ENCODE measurements at regions of chr14 and their contacts with region 1.

Region 1: DNA sequence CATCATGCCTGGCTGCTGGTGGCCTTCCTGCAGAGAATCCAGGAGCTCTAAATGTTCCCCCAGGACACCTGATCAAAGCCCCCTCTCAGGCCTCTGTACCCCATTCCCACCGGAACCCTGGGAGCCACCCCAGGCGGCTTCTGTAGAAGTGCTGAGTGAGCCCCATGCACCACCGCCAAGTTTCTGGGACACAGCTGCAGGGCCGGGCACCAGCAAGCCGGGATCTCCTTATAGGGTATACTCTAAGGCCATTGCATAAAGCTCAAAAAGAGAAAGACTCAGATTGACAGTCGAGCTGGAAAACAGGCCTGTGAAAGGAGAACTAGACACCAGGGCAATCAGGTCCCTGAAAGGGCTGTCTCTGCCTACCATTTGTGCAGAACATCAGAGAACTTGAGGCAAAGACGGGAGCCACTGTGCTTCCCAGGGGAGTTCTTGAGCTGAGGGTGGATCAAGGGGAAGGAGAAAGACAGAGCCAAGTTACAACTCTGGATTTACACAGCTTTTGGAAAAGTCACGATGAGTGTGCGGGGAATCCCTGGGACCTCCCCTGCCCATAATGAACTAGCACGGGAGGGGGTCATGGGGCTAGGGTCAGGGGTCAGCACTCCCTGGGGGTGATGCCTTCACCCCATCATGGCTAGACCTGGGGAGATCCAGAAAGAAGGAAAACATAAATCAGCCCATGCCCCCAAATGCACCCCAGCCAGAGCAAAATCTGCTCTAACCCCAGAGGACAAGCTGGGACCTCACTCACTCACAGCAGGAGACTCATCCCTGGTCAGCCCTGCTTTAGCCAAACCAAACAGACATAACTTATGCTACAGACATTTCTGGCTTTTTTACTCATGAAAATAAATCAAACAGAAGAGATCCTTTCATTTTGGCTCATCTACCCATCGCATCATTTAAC is 51.1 kb downstream of the ITPK1 start:
- DNase-seq: no peak
- ATAC-seq: no peak
- H3K4me3 ChIP-seq: no peak overlapping the region
- H3K4me3 Mint-ChIP-seq: peak overlapping the region; percentile 41
- H3K27ac ChIP-seq: peak overlapping the region; percentile 23 to 28
- H3K27ac Mint-ChIP-seq: peak overlapping the region; percentile 79
- H3K4me1 ChIP-seq: peaks cover 40 to 49% of the 10 kb centered on the region in 2 donors
- H3K4me1 Mint-ChIP-seq: peaks cover 75% of the 10 kb centered on the region
- H3K27me3 ChIP-seq: no peaks in the 10 kb centered on the region
- H3K27me3 Mint-ChIP-seq: no peaks in the 10 kb centered on the region
- CTCF ChIP-seq: no peak

Region 2: GRCh38 chr14:93081876-93082570 is 17.4 kb after region 1 on chr14:
- CTCF ChIA-PET with region 1: no interaction called
- POLR2A ChIA-PET with region 1: no interaction called
- intact Hi-C with region 1: no loop called
- DNase-seq: no peak
- ATAC-seq: no peak
- H3K4me3 ChIP-seq: no peak overlapping the region
- H3K4me3 Mint-ChIP-seq: no peak overlapping the region
- H3K27ac ChIP-seq: peak overlapping the region; percentile 35 to 49
- H3K27ac Mint-ChIP-seq: peak overlapping the region; percentile 16
- H3K4me1 ChIP-seq: peaks cover 9 to 26% of the 10 kb centered on the region in 2 donors
- H3K4me1 Mint-ChIP-seq: peaks cover 40% of the 10 kb centered on the region
- H3K27me3 ChIP-seq: no peaks in the 10 kb centered on the region
- H3K27me3 Mint-ChIP-seq: no peaks in the 10 kb centered on the region
- CTCF ChIP-seq: no peak

Region 3: DNA sequence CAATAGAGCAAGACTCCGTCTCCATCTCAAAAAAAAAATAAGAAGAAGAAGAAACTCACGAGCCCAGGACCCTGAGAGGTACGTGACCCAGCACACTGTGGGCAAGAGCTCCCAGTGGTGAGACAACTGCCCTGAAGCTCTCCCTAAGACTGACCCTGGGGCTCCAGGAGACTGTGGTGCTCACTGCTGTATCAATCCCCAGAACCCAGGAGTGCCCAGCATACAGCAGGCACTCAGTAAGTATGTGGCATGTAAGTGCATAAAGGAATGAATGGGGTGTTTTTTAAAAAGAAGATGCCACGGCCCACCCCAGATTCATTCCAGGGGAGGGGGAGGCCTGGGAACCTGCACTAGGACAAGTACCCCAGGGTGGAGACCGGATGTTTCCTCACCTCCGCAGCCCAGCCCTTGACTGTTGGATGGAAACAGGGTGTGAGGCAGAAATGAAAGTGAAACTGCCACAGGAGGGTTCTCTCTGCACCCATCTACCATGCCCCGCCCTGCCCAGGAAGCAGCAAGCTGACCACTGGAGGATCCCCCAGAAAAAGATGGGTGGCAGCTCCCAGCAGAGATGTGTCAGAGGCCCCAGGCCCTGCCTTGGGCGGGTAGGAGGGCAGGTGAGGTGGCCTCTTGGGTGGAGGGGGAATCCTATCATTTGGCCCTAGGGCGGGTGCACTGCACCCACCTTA is 38.9 kb after region 1 on chr14:
- CTCF ChIA-PET with region 1: no interaction called
- POLR2A ChIA-PET with region 1: interaction called, 3 read pairs
- intact Hi-C with region 1: loop called (anchors 5 kb)
- DNase-seq: peak; percentile 66
- ATAC-seq: peak; percentile 95
- H3K4me3 ChIP-seq: peak overlapping the region in 4 of 5 experiments; percentile 26 to 47 (median 39)
- H3K4me3 Mint-ChIP-seq: peak overlapping the region; percentile 79
- H3K27ac ChIP-seq: peak overlapping the region; percentile 68 to 76
- H3K27ac Mint-ChIP-seq: peak overlapping the region; percentile 93
- H3K4me1 ChIP-seq: peaks cover 25 to 50% of the 10 kb centered on the region in 2 donors
- H3K4me1 Mint-ChIP-seq: peaks cover 45% of the 10 kb centered on the region
- H3K27me3 ChIP-seq: no peaks in the 10 kb centered on the region
- H3K27me3 Mint-ChIP-seq: no peaks in the 10 kb centered on the region
- CTCF ChIP-seq: no peak

Region 4: GRCh38 chr14:93219103-93219726 is 154.5 kb after region 1 on chr14:
- CTCF ChIA-PET with region 1: no interaction called
- POLR2A ChIA-PET with region 1: interaction called, 13 read pairs
- intact Hi-C with region 1: no loop called
- DNase-seq: peak; percentile 68
- ATAC-seq: peak; percentile 60
- H3K4me3 ChIP-seq: no peak overlapping the region
- H3K4me3 Mint-ChIP-seq: no peak overlapping the region
- H3K27ac ChIP-seq: no peak overlapping the region
- H3K27ac Mint-ChIP-seq: no peak overlapping the region
- H3K4me1 ChIP-seq: no peaks in the 10 kb centered on the region
- H3K4me1 Mint-ChIP-seq: no peaks in the 10 kb centered on the region
- H3K27me3 ChIP-seq: no peaks in the 10 kb centered on the region
- H3K27me3 Mint-ChIP-seq: no peaks in the 10 kb centered on the region
- CTCF ChIP-seq: peak; percentile 84